CD8-positive, alpha-beta T cell (primary cell): ENCODE measurements at regions of chr1 and their contacts with region 1.

Region 1: GRCh38 chr1:212035123-212035834 is at the starts of genes DTL and INTS7:
- DNase-seq: peak; percentile 95 to 100 (median 98)
- ATAC-seq: peak; percentile 90
- H3K4me3 ChIP-seq: peak within 1 kb of the TSS; percentile 77 to 98
- H3K4me3 Mint-ChIP-seq: peak within 1 kb of the TSS; percentile 99
- H3K27ac ChIP-seq: peak within 1 kb of the TSS; percentile 75 to 82
- H3K27ac Mint-ChIP-seq: peak within 1 kb of the TSS; percentile 98
- H3K4me1 ChIP-seq: peaks cover 19% of the 10 kb centered on the region
- H3K4me1 Mint-ChIP-seq: peaks cover 47% of the 10 kb centered on the region
- H3K27me3 ChIP-seq: no peaks in the 10 kb centered on the region
- H3K27me3 Mint-ChIP-seq: no peaks in the 10 kb centered on the region
- CTCF ChIP-seq: peak; percentile 93
- total RNA-seq, gene DTL: 1.0 to 1.2 TPM
- total RNA-seq, gene INTS7: 2.4 to 3.3 TPM

Region 2: GRCh38 chr1:211675230-211676105 is 359.8 kb before region 1 on chr1 and contains the start of gene NEK2:
- CTCF ChIA-PET with region 1: interaction called, 30 read pairs
- POLR2A ChIA-PET with region 1: interaction called, 8 read pairs
- intact Hi-C with region 1: loop called (anchors 1 kb)
- DNase-seq: peak; percentile 61 to 92 (median 84)
- ATAC-seq: peak; percentile 89
- H3K4me3 ChIP-seq: peak within 1 kb of the TSS; percentile 67 to 85
- H3K4me3 Mint-ChIP-seq: peak within 1 kb of the TSS; percentile 91
- H3K27ac ChIP-seq: peak within 1 kb of the TSS; percentile 18 to 22
- H3K27ac Mint-ChIP-seq: peak within 1 kb of the TSS; percentile 76
- H3K4me1 ChIP-seq: peaks cover 7% of the 10 kb centered on the region
- H3K4me1 Mint-ChIP-seq: peaks cover 14% of the 10 kb centered on the region
- H3K27me3 ChIP-seq: no peaks in the 10 kb centered on the region
- H3K27me3 Mint-ChIP-seq: no peaks in the 10 kb centered on the region
- CTCF ChIP-seq: no peak
- total RNA-seq, gene NEK2: 0.19 to 0.35 TPM

Region 3: DNA sequence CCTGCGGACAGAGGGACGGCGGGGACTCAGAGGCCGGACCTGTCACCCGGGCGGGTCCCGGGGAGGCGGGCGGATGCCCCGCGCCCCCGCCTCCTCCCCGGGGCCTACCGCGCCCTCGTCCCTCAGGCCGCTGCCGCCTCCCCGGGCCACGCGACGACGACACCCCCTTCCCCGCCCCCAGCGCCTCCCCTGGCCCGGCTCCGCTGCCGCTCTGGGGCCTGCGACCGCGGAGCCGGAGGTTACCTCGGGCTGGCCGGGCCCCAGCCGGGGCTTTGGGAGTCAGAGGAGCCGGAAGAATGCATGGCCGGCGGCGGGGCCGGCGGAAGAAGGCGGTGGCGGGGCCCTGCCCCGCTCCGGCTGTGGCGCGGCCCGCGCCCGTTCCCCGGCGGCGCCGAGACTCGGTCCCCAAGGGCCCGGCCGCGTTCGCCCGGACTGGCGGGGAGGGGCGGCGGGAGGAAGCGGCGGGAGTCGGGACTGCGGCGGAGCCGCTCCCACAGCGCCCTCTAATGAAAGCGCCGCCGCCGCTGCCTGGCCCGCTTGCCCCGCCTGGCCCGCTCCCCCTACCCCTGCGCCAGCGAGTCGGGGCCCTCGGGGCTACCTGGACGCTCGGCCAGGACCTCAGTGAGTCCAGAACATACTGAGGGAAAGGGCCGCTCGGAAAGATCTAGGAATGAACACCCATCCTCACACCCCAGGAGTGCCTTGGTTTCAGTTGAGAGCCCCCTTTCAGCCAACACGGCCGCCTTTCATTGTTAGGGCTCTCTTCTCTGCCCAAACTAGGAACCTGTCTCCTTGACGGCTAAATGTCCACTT is 204.7 kb before region 1 on chr1 and contains the start of gene LPGAT1:
- CTCF ChIA-PET with region 1: no interaction called
- POLR2A ChIA-PET with region 1: no interaction called
- intact Hi-C with region 1: loop called in 1 of 2 experiments (anchors 1 kb)
- DNase-seq: peak; percentile 37 to 84 (median 71)
- ATAC-seq: peak; percentile 79
- H3K4me3 ChIP-seq: peak within 1 kb of the TSS; percentile 69 to 75
- H3K4me3 Mint-ChIP-seq: peak within 1 kb of the TSS; percentile 90
- H3K27ac ChIP-seq: peak within 1 kb of the TSS; percentile 50 to 78
- H3K27ac Mint-ChIP-seq: peak within 1 kb of the TSS; percentile 92
- H3K4me1 ChIP-seq: peaks cover 44% of the 10 kb centered on the region
- H3K4me1 Mint-ChIP-seq: peaks cover 64% of the 10 kb centered on the region
- H3K27me3 ChIP-seq: no peaks in the 10 kb centered on the region
- H3K27me3 Mint-ChIP-seq: no peaks in the 10 kb centered on the region
- CTCF ChIP-seq: peak; percentile 51
- total RNA-seq, gene LPGAT1: 17.9 to 19.1 TPM

Region 4: GRCh38 chr1:212070720-212071302 is 35.5 kb after region 1 on chr1:
- CTCF ChIA-PET with region 1: interaction called, 11 read pairs
- POLR2A ChIA-PET with region 1: no interaction called
- intact Hi-C with region 1: no loop called
- DNase-seq: peak in 2 of 9 experiments; percentile 60 to 72
- ATAC-seq: peak; percentile 68
- H3K4me3 ChIP-seq: no peak overlapping the region
- H3K4me3 Mint-ChIP-seq: no peak overlapping the region
- H3K27ac ChIP-seq: no peak overlapping the region
- H3K27ac Mint-ChIP-seq: no peak overlapping the region
- H3K4me1 ChIP-seq: no peaks in the 10 kb centered on the region
- H3K4me1 Mint-ChIP-seq: no peaks in the 10 kb centered on the region
- H3K27me3 ChIP-seq: no peaks in the 10 kb centered on the region
- H3K27me3 Mint-ChIP-seq: no peaks in the 10 kb centered on the region
- CTCF ChIP-seq: peak; percentile 71

Region 5: GRCh38 chr1:212432706-212433576 is 397.7 kb after region 1 on chr1 and contains the start of gene NENF:
- CTCF ChIA-PET with region 1: interaction called, 3 read pairs
- POLR2A ChIA-PET with region 1: no interaction called
- intact Hi-C with region 1: loop called in 1 of 2 experiments (anchors 5 kb)
- DNase-seq: peak; percentile 44 to 86 (median 70)
- ATAC-seq: peak; percentile 99
- H3K4me3 ChIP-seq: peak within 1 kb of the TSS; percentile 61 to 71
- H3K4me3 Mint-ChIP-seq: peak within 1 kb of the TSS; percentile 81
- H3K27ac ChIP-seq: peak within 1 kb of the TSS in 1 of 2 experiments; percentile 55
- H3K27ac Mint-ChIP-seq: peak within 1 kb of the TSS; percentile 74
- H3K4me1 ChIP-seq: peaks cover 17% of the 10 kb centered on the region
- H3K4me1 Mint-ChIP-seq: peaks cover 34% of the 10 kb centered on the region
- H3K27me3 ChIP-seq: no peaks in the 10 kb centered on the region
- H3K27me3 Mint-ChIP-seq: no peaks in the 10 kb centered on the region
- CTCF ChIP-seq: no peak
- total RNA-seq, gene NENF: 17.7 to 20.3 TPM

Region 6: DNA sequence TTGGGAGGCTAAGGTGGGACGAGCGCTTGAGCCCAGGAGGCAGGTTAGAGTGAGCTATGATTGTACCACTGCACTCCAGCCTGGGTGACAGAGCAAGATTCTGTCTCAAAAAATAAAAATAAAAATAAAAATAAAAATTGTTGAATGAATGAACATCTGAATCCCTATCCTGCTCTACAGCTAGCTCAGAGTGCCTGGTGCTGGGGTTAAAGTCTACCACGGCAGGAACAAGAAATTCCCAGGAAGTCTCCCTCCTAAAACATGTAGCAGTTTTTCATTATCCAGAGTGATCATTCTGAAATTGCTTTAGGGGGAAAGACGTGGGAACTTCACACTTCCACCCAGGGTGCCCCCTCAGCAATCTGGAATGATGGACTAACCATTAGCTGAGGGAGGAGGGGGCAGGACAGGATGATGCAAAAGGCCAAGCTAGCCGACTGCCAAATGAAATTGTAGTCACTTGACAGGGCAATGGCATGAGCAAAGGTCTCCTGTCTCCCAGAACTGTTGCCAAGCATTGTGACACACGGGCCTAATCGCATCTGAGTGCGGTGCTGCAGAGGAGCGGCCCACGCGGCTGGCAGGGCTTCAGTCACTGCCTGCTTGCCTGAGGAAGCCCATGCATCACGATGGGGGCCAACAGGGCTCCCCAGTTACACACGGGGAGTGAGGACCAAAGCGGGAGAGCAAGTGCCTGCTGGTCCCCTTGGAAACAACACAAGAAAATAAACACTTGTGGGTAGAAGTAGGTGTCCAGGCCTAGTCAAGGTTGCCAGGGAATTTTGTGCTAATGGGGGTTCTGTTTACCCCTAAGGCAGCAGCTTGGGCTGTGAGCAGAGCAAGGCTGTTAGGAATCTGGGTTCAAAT is 483.1 kb after region 1 on chr1:
- CTCF ChIA-PET with region 1: no interaction called
- POLR2A ChIA-PET with region 1: no interaction called
- intact Hi-C with region 1: no loop called
- DNase-seq: no peak
- ATAC-seq: no peak
- H3K4me3 ChIP-seq: no peak overlapping the region
- H3K4me3 Mint-ChIP-seq: no peak overlapping the region
- H3K27ac ChIP-seq: no peak overlapping the region
- H3K27ac Mint-ChIP-seq: no peak overlapping the region
- H3K4me1 ChIP-seq: peaks cover 6% of the 10 kb centered on the region
- H3K4me1 Mint-ChIP-seq: peaks cover 12% of the 10 kb centered on the region
- H3K27me3 ChIP-seq: peaks cover 8 to 13% of the 10 kb centered on the region in 2 experiments
- H3K27me3 Mint-ChIP-seq: peaks cover 40% of the 10 kb centered on the region
- CTCF ChIP-seq: no peak

Region 7: DNA sequence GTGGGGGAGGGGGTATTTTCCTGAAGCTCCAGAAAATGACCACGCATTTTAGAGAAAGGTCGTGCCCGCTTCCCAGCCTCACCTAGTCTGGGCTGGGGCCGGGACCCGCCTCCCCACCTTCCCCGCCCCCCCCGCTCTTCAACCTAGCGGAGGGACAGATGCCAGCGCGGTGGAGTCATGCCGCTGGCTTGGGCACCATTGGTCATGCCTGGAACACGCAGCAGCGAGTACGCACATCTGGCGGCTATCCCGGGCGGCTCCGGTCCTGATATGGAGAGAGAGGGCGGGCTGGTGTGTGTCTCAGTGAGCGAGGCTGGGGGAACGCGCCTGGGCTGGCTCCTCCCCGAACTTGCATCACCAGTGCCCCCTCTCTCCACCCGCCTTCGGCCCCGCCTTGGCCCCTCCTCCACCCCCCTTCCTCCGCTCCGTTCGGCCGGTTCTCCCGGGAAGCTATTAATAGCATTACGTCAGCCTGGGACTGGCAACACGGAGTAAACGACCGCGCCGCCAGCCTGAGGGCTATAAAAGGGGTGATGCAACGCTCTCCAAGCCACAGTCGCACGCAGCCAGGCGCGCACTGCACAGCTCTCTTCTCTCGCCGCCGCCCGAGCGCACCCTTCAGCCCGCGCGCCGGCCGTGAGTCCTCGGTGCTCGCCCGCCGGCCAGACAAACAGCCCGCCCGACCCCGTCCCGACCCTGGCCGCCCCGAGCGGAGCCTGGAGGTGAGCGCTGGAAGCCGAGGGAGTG is 573.1 kb after region 1 on chr1 and contains the start of gene ATF3:
- CTCF ChIA-PET with region 1: no interaction called
- POLR2A ChIA-PET with region 1: no interaction called
- intact Hi-C with region 1: loop called in 1 of 2 experiments (anchors 10 kb)
- DNase-seq: peak; percentile 62 to 91 (median 78)
- ATAC-seq: peak; percentile 73
- H3K4me3 ChIP-seq: peak within 1 kb of the TSS; percentile 75 to 86
- H3K4me3 Mint-ChIP-seq: peak within 1 kb of the TSS; percentile 94
- H3K27ac ChIP-seq: peak within 1 kb of the TSS in 1 of 2 experiments; percentile 31
- H3K27ac Mint-ChIP-seq: peak within 1 kb of the TSS; percentile 83
- H3K4me1 ChIP-seq: peaks cover 25% of the 10 kb centered on the region
- H3K4me1 Mint-ChIP-seq: peaks cover 22% of the 10 kb centered on the region
- H3K27me3 ChIP-seq: peaks cover 39 to 56% of the 10 kb centered on the region in 2 experiments
- H3K27me3 Mint-ChIP-seq: peaks cover 54% of the 10 kb centered on the region
- CTCF ChIP-seq: no peak
- total RNA-seq, gene ATF3: 8.9 to 10.4 TPM

Region 8: GRCh38 chr1:213015099-213016050 is 980.1 kb after region 1 on chr1 and contains the start of gene ANGEL2:
- CTCF ChIA-PET with region 1: no interaction called
- POLR2A ChIA-PET with region 1: no interaction called
- intact Hi-C with region 1: loop called (anchors 1 to 10 kb)
- DNase-seq: peak; percentile 90 to 99 (median 95)
- ATAC-seq: peak; percentile 97
- H3K4me3 ChIP-seq: peak within 1 kb of the TSS; percentile 90 to 96
- H3K4me3 Mint-ChIP-seq: peak within 1 kb of the TSS; percentile 100
- H3K27ac ChIP-seq: peak within 1 kb of the TSS; percentile 90 to 92
- H3K27ac Mint-ChIP-seq: peak within 1 kb of the TSS; percentile 100
- H3K4me1 ChIP-seq: peaks cover 19% of the 10 kb centered on the region
- H3K4me1 Mint-ChIP-seq: peaks cover 40% of the 10 kb centered on the region
- H3K27me3 ChIP-seq: no peaks in the 10 kb centered on the region
- H3K27me3 Mint-ChIP-seq: no peaks in the 10 kb centered on the region
- CTCF ChIP-seq: no peak
- total RNA-seq, gene ANGEL2: 47.4 to 52.5 TPM